ENCODE measurements at regions of chr2 and their contacts with region 1.

Region 1: DNA sequence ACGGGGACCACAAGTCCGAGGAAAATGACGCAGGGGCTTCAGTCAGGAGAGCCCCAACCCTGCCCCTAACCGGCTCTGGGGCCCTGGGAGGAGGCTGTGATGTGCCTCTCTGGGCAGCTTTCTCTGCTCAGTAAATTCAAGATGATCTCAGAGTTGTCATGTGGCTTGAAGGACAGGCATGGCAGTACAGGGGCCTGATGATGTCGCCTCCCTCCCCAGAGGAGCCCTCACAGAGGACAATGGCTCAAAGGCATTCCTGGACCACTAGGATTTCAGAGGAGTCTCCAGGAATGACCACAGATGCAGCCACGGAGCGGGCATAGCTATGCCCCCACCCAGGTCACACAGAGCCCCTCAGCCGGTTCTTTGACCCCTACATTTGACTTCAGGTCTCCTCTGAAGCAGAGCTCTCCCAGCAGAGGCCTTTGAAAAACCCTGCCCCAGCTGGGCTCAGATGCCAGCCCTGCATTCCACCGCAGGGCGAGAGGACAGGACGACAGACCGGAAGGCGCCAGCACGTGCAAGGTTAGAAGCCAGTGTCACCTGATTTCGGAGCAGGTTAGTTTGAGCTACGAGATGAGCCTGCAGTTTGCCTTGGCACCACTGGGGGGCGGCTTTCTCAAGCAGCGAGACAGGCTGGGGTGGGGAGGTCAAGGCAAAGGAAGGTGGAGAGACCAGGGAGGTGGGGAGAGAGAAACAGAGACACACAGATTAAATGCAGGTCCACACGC is 39.2 kb downstream of the BIN1 start:
- DNase-seq: peak; percentile 65 to 96 (median 80)

Region 2: GRCh38 chr2:126945118-126945517 is 122.7 kb before region 1 on chr2:
- intact Hi-C with region 1: no loop called
- DNase-seq: peak in 1 of 10 donors; percentile 59

Region 3: GRCh38 chr2:127174136-127174535 is 106.4 kb after region 1 on chr2:
- intact Hi-C with region 1: loop called (anchors 1 kb)
- DNase-seq: peak in 5 of 10 donors; percentile 32 to 55 (median 51)